Ovary (tissue), 10 donors: ENCODE measurements at regions of chr6 and their contacts with region 1.

Region 1: GRCh38 chr6:30489081-30490025 is at the start of gene HLA-E:
- DNase-seq: peak; percentile 88 to 97 (median 92)
- H3K4me3 ChIP-seq: peak within 1 kb of the TSS; percentile 57
- H3K27ac ChIP-seq: peak within 1 kb of the TSS; percentile 84 to 98
- H3K4me1 ChIP-seq: peaks cover 4% of the 10 kb centered on the region
- H3K27me3 ChIP-seq: no peaks in the 10 kb centered on the region
- CTCF ChIP-seq: no peak
- EP300 ChIP-seq: peak; percentile 99
- POLR2A ChIP-seq: peak; percentile 98
- total RNA-seq, gene HLA-E: 181 to 322 (median 238) TPM

Region 2: GRCh38 chr6:30453508-30454116 is 35.7 kb before region 1 on chr6:
- intact Hi-C with region 1: no loop called
- DNase-seq: peak; percentile 41 to 89 (median 78)
- H3K4me3 ChIP-seq: no peak overlapping the region
- H3K27ac ChIP-seq: no peak overlapping the region
- H3K4me1 ChIP-seq: no peaks in the 10 kb centered on the region
- H3K27me3 ChIP-seq: no peaks in the 10 kb centered on the region
- CTCF ChIP-seq: peak; percentile 16 to 54 (median 46)
- EP300 ChIP-seq: no peak
- POLR2A ChIP-seq: no peak

Region 3: GRCh38 chr6:30656513-30656912 is 167.2 kb after region 1 on chr6:
- intact Hi-C with region 1: loop called in 1 of 4 experiments (anchors 10 kb)
- DNase-seq: no peak
- H3K4me3 ChIP-seq: no peak overlapping the region
- H3K27ac ChIP-seq: no peak overlapping the region
- H3K4me1 ChIP-seq: no peaks in the 10 kb centered on the region
- H3K27me3 ChIP-seq: no peaks in the 10 kb centered on the region
- CTCF ChIP-seq: no peak
- EP300 ChIP-seq: no peak
- POLR2A ChIP-seq: no peak